ENCODE measurements at regions of chr15 and their contacts with region 1.

Region 1: GRCh38 chr15:77419836-77420609 is at the start of gene PEAK1:
- DNase-seq: peak; percentile 100
- H3K4me3 Mint-ChIP-seq: peak within 1 kb of the TSS; percentile 95
- H3K27ac Mint-ChIP-seq: peak within 1 kb of the TSS; percentile 98
- H3K4me1 Mint-ChIP-seq: peaks cover 36% of the 10 kb centered on the region
- H3K27me3 Mint-ChIP-seq: no peaks in the 10 kb centered on the region
- total RNA-seq, gene PEAK1: 26.6 to 28.0 TPM

Region 2: DNA sequence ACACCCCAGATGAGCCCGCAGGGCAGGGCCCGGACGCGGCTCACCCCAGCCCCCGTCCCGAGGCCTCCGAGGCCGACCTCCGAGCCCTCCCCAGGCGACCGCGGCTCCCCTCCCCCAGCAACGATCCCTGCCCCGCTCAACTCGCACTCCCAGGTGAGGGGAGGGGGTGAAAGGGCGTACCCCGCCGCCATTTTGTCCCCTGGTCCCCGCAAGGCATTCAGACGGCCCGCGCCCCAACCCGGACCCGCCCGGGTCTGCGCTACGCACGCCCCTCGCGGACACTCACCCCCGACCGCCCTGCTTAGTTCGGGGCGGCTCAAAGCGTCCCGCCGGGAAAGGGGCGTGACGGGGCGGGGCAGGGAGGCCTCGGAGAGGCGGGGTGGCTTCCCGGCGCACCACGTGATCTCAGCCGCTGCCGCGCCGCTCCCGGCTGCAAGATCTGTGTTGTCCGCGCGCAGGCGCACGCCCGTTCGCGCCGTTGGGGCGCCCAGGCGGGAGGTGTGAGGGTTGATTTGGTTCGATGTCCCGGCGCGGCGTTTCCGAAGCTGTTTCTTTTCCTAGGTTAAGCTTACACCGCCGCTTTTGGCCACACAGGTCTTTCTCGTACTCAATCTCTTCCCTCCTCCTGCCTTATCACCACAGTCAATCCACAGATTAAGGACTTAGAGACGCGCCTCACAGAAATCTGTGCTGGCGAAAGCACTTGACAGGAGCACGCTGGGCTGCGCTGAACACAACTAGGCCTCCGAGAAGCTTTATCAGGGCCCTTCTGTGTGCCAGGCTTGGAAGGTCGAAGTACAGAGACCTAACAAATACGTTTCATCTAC is 514.8 kb before region 1 on chr15 and contains the start of gene SCAPER:
- CTCF ChIA-PET with region 1: no interaction called
- intact Hi-C with region 1: loop called (anchors 10 kb)
- DNase-seq: peak; percentile 93
- H3K4me3 Mint-ChIP-seq: peak within 1 kb of the TSS; percentile 83
- H3K27ac Mint-ChIP-seq: peak within 1 kb of the TSS; percentile 91
- H3K4me1 Mint-ChIP-seq: peaks cover 31% of the 10 kb centered on the region
- H3K27me3 Mint-ChIP-seq: no peaks in the 10 kb centered on the region
- total RNA-seq, gene SCAPER: 28.5 to 28.9 TPM

Region 3: DNA sequence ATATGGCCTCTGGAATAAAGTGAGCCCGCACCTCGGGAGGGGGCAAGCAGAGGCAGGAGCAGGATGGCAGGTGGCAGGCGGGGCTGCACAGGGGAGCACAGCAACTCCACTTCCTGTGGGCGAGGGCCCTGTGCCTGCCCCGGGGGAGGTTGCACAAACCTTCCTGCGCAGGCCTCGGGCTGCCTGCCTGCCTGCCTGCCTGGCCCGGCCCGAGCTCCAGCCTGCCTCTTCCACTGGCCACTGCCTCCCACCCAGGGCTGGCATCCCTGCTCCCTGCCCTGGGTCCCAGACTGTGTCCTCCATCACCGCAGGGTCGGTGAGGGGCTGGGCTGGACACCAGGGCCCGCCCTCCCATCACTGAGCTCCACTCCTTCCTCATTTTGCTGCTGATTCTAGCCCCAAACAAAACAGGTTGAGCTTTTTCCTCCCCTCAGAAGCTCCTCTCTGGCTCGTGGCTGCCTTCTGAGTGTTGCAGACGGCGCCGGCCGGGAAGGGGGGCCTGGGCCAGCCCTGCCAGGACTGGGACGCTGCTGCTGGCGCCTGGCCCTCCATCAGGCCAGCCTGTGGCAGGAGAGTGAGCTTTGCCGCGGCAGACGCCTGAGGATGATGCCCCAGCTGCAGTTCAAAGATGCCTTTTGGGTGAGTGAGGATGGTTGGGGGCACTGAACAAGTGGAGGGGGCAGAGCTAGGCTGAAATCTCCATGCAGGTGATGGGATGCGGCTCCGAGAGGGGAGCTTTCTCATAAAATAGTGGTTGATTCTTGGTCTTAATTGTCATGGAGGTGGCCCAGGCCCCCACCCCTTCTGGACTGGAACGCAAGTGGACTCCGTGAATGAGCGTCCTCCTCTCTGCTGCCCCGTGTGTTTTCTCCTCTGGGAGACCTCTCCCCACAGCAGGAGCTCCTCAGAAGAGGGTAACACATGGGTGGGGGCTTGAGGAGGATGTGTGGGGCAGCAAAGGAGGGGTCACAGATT is 424.8 kb before region 1 on chr15 and contains the start of gene PSTPIP1:
- CTCF ChIA-PET with region 1: no interaction called
- intact Hi-C with region 1: loop called (anchors 5 kb)
- DNase-seq: peak; percentile 86
- H3K4me3 Mint-ChIP-seq: peak within 1 kb of the TSS; percentile 84
- H3K27ac Mint-ChIP-seq: peak within 1 kb of the TSS; percentile 98
- H3K4me1 Mint-ChIP-seq: peaks cover 58% of the 10 kb centered on the region
- H3K27me3 Mint-ChIP-seq: no peaks in the 10 kb centered on the region
- total RNA-seq, gene PSTPIP1: 94.2 to 102 TPM

Region 4: DNA sequence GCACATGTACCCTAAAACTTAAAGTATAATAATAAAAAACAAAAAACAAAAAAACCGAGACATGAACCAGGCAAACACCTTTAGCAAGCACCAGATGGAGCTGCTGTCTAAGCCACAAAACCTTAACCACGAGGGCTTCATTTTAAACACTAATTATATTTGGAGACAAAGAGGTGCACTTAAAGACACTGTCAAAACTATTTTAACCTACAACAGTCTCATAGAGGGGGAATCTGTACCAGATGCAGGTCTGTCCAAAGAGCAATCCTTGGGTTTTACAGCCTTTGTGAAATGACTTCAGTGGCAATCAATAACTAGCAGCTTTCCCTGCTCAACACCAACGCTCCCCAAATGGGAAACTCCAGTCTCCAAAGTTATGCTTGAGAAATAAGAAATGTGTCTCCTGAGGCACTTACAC is 233.4 kb before region 1 on chr15:
- CTCF ChIA-PET with region 1: no interaction called
- intact Hi-C with region 1: loop called (anchors 2 kb)
- DNase-seq: peak; percentile 35
- H3K4me3 Mint-ChIP-seq: no peak overlapping the region
- H3K27ac Mint-ChIP-seq: no peak overlapping the region
- H3K4me1 Mint-ChIP-seq: peaks cover 52% of the 10 kb centered on the region
- H3K27me3 Mint-ChIP-seq: no peaks in the 10 kb centered on the region

Region 5: DNA sequence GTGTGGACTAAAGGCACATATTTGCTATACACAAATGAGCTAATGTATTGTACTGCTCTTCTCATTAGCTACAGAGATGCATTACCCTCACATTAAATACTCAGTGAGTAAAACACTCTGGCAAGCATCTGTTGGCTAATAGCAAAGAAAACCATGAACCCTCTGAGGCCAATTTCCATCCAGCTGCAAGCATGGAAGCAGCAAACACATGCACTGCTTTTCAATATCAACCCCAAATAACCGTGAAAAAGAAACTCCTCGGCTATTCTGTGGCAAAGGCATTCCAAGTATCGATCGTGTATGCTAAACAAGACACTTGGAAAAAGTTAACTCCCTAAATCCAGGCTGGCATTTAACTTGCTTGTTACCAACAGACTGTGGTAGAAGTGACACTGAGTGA is 67.1 kb before region 1 on chr15:
- CTCF ChIA-PET with region 1: no interaction called
- intact Hi-C with region 1: no loop called
- DNase-seq: no peak
- H3K4me3 Mint-ChIP-seq: no peak overlapping the region
- H3K27ac Mint-ChIP-seq: no peak overlapping the region
- H3K4me1 Mint-ChIP-seq: peaks cover under 1% of the 10 kb centered on the region
- H3K27me3 Mint-ChIP-seq: no peaks in the 10 kb centered on the region

Region 6: DNA sequence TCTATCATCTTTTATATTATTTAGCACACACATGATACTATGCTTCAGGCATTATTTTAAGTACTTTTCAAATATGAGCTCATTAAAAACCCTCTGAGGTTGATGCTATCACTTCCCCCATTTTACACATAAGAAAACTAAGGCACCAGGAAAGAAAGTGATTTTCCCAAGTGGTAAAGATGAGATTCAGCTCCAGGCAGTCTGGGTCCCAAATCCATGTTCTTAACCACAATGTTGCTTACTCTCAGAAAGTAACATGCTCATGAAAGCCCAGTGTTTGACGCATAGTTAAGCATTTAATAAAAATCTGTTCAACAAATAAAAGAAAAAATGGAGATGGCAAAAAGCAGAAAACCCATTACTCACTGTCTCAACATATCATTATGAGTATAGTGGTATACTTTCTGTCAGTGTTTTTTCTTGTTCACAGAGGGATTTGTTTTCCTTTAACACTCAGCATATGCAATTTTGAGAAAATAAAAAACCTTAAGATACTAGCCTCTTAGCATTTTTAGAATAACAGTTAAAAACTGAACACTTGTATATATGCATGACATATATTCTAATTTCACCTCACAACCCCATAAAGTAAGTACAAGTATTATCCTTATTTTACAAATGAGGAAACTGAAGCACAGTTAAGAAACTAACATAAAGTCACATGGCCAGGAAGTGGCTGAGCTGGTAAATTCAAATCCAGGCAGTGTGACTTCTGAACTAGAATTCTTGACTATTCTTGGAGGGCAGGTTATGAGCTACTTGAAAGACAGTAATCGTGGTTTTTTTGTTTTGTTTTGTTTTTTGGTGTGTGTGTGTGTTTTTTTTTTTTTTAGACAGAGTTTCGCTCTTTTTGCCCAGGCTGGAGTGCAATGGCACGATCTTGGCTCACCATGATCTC is 10.5 kb before region 1 on chr15:
- CTCF ChIA-PET with region 1: interaction called, 3 read pairs
- intact Hi-C with region 1: loop called (anchors 1 kb)
- DNase-seq: peak; percentile 65
- H3K4me3 Mint-ChIP-seq: peak overlapping the region; percentile 68
- H3K27ac Mint-ChIP-seq: peak overlapping the region; percentile 86
- H3K4me1 Mint-ChIP-seq: peaks cover 38% of the 10 kb centered on the region
- H3K27me3 Mint-ChIP-seq: no peaks in the 10 kb centered on the region

Measured in activated naive CD4-positive, alpha-beta T cell treated with anti-CD3 and anti-CD28 coated beads for 36 hours (primary cell).